Activated T-helper 1 cell treated with anti-CD3 and anti-CD28 coated beads, Interleukin-12 subunit alpha, Interleukin-12 subunit beta, Interleukin-2, Interleukin-4 antibody, amounts not matched to agents 30 ng/mL and 10 ng/mL and 1 ng/mL, durations not matched to agents 14 hours and 24 hours and 36 hours (primary cell): ENCODE measurements at regions of chr21 and their contacts with region 1.

Region 1: DNA sequence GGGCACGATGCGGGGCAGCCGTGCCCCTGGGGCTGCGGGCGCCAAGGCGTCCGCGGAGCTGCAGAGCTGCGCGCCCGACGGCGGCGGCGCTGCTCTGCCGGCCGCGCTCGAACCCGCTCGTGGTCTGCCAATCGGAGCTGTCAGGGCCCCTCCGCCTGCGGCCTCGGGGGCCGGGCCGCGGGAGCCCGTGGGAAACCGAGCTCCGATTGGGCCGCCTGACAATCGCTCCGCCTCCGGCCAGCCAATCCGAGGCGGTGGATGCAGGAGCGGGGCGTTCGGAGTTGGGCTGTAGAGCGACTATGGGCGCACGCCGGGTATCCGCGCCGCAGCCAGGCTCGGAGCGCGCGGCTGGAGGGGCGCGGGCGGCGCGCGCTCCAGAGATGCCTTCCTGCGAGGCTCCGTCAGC is 100.5 kb upstream of the SOD1 start:
- DNase-seq: peak; percentile 93
- H3K4me3 Mint-ChIP-seq: peak overlapping the region; percentile 89
- H3K27ac Mint-ChIP-seq: no peak overlapping the region
- H3K4me1 Mint-ChIP-seq: peaks cover 48% of the 10 kb centered on the region
- H3K27me3 Mint-ChIP-seq: peaks cover 35% of the 10 kb centered on the region

Region 2: GRCh38 chr21:31198575-31198974 is 360.4 kb before region 1 on chr21:
- intact Hi-C with region 1: loop called (anchors 1 kb)
- DNase-seq: no peak
- H3K4me3 Mint-ChIP-seq: no peak overlapping the region
- H3K27ac Mint-ChIP-seq: no peak overlapping the region
- H3K4me1 Mint-ChIP-seq: peaks cover 46% of the 10 kb centered on the region
- H3K27me3 Mint-ChIP-seq: no peaks in the 10 kb centered on the region

Region 3: GRCh38 chr21:31354604-31355443 is 204.1 kb before region 1 on chr21:
- intact Hi-C with region 1: loop called (anchors 1 kb)
- DNase-seq: peak; percentile 85
- H3K4me3 Mint-ChIP-seq: peak overlapping the region; percentile 38
- H3K27ac Mint-ChIP-seq: peak overlapping the region; percentile 77
- H3K4me1 Mint-ChIP-seq: peaks cover 14% of the 10 kb centered on the region
- H3K27me3 Mint-ChIP-seq: peaks cover 2% of the 10 kb centered on the region

Region 4: GRCh38 chr21:31509194-31510017 is 49.6 kb before region 1 on chr21:
- intact Hi-C with region 1: loop called (anchors 1 kb)
- DNase-seq: peak; percentile 83
- H3K4me3 Mint-ChIP-seq: peak overlapping the region; percentile 45
- H3K27ac Mint-ChIP-seq: peak overlapping the region; percentile 73
- H3K4me1 Mint-ChIP-seq: peaks cover 51% of the 10 kb centered on the region
- H3K27me3 Mint-ChIP-seq: peaks cover 32% of the 10 kb centered on the region

Region 5: DNA sequence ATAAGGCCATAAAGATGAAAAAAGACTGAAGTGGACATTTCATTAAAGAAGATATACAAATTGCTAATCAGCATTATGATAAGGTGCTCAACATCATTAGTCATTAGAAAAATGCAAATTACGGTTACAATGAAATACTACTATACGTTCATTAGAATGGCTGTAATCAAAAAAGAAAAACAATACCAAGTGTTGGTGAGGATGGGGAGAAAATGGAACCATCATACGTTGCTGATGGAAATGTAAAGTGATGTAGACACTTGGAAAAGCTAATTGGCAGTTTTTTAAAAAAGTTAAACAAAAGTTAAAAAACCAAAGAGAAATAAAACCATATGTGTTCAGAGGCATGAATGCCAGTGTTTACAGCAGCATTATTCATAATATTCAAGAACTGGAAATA is 92.0 kb after region 1 on chr21:
- intact Hi-C with region 1: no loop called
- DNase-seq: no peak
- H3K4me3 Mint-ChIP-seq: no peak overlapping the region
- H3K27ac Mint-ChIP-seq: no peak overlapping the region
- H3K4me1 Mint-ChIP-seq: peaks cover 19% of the 10 kb centered on the region
- H3K27me3 Mint-ChIP-seq: peaks cover 12% of the 10 kb centered on the region

Region 6: DNA sequence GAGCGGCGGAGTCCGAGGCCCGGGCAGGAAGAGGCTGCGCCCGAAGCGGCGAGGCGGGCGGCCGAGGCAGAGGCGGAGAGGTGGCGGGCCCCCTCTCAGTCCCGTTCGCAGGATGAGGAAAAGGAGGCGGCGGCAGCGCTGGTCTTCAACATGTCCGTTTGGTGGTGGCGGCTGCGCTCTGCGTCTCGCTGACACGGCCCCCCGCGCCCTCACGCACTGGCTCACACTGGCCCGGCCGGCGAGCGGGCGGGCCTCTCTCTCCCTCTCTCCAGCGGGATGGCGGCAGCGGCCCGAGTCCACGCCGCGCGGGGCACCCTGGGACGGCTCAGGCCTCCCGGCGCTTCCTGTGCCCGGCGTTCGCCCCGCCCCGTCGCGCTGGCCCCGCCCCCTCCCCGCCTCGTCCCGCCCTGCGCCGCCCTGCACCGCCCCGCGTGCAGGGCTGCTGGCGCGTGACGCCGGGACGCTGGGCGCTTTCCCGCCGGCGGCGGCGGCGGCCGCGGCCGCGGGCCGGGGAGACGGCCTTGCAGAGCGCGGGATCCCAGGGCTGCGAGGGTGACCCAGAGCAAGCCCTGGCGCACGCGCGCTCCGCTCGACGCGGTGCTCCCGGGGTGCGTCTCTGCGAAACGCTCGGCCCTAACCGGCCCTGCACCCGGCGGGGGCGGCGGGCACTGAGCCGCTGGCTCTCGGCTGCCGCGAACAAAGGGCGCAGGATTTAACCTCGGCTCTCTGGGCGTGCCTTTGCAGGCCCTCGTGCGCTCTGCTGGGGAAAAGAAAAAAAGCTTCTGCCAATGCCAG is 173.0 kb after region 1 on chr21 and contains the start of gene SCAF4:
- intact Hi-C with region 1: loop called (anchors 2 kb)
- DNase-seq: peak; percentile 78
- H3K4me3 Mint-ChIP-seq: no peak within 1 kb of the TSS
- H3K27ac Mint-ChIP-seq: peak within 1 kb of the TSS; percentile 79
- H3K4me1 Mint-ChIP-seq: no peaks in the 10 kb centered on the region
- H3K27me3 Mint-ChIP-seq: no peaks in the 10 kb centered on the region
- total RNA-seq, gene SCAF4: 66.1 and 70.6 TPM in 2 replicates